Gastrocnemius medialis (tissue), 4 donors: ENCODE measurements at regions of chr9 and their contacts with region 1.

Region 1: GRCh38 chr9:93217706-93218105 is 33.8 kb downstream of the WNK2 start:
- DNase-seq: peak; percentile 67 to 89
- ATAC-seq: peak; percentile 62 to 66
- H3K4me3 ChIP-seq: no peak overlapping the region
- H3K27ac ChIP-seq: peak overlapping the region; percentile 97 to 99 (median 98)
- H3K4me1 ChIP-seq: peaks cover 46 to 49% of the 10 kb centered on the region in 2 donors
- H3K27me3 ChIP-seq: no peaks in the 10 kb centered on the region
- CTCF ChIP-seq: no peak
- POLR2A ChIP-seq: no peak

Region 2: DNA sequence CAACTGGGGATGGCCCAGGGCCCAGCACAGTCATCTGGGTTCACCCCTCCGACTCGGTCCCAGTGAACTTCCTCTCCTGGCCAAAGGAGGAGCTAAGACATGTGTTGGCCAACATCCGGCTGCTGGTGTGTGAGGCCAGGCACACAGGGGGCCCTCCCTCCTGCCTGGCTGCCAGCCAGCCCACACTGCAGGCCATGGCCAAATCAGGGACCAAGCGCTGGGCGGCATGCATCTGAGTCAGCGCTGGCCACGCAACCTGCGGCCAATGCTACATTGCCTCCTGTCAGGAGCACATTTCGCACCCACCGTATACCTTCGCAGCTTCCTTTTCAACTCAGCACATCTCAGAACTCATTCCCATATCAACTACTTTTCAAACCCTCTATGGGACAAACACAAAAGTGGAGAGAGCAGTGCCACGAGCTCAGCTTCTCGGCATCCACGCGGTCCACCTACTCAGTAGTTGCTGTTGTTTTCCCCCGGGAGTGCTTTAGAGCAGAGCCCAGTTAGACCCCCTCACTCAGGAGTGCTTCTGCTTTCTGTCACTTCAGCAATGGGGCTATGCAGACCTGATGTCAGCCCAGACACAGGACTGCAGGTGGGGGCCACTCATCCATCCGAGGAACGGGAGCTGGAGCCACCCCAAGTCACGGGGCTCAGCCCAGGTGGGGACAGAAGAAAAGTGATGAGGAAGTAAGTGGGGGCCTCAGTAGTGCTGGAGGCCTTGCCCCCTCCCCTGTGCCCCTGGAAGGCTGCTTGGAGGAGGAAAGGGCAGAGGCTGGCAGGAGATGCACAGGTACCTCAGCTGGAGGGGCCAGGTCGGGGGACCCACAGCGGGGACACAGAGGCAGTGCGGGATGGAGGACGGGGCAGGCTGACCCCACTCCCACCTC is 97.5 kb before region 1 on chr9:
- in situ Hi-C with region 1: no loop called
- intact Hi-C with region 1: loop called (anchors 5 kb)
- DNase-seq: peak; percentile 85 to 93
- ATAC-seq: peak; percentile 68 to 79
- H3K4me3 ChIP-seq: no peak overlapping the region
- H3K27ac ChIP-seq: peak overlapping the region; percentile 65 to 72 (median 68)
- H3K4me1 ChIP-seq: peaks cover 11 to 18% of the 10 kb centered on the region in 2 donors
- H3K27me3 ChIP-seq: no peaks in the 10 kb centered on the region
- CTCF ChIP-seq: peak in 4 of 5 experiments; percentile 38 to 58 (median 45)
- POLR2A ChIP-seq: peak; percentile 21 to 29

Region 3: GRCh38 chr9:93183609-93184431 is 33.9 kb before region 1 on chr9 and contains the start of gene WNK2:
- in situ Hi-C with region 1: no loop called
- intact Hi-C with region 1: loop called (anchors 1 kb)
- DNase-seq: no peak
- ATAC-seq: peak; percentile 68 to 69
- H3K4me3 ChIP-seq: peak within 1 kb of the TSS; percentile 60 to 72 (median 68)
- H3K27ac ChIP-seq: peak within 1 kb of the TSS; percentile 71 to 86 (median 82)
- H3K4me1 ChIP-seq: peaks cover 38% of the 10 kb centered on the region in 2 donors
- H3K27me3 ChIP-seq: no peaks in the 10 kb centered on the region
- CTCF ChIP-seq: peak in 1 of 5 experiments; percentile 8
- POLR2A ChIP-seq: peak; percentile 80 to 84
- total RNA-seq, gene WNK2: 11.3 to 43.0 (median 24.7) TPM